ENCODE measurements at regions of chr9 and their contacts with region 1.

Region 1: DNA sequence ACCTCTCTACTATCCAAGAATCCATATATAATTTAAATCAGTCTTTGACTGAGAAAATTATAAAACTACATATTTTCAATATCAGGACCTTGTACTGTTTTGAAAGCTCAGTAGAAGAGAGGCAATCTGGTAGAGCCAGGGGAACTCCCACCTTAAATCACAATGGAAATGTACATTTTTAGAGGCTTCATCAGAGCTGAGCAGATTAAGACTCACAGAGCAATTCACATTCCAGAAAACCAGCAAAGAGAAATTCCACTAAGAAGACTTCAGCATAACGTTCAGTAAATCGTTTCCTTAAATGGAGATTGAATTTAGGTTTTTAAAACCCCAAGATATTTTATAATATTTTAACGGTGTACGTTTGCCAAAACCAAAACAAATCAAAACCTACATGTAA is 227.8 kb upstream of the TRPM3 start:
- DNase-seq: no peak
- H3K4me3 Mint-ChIP-seq: no peak overlapping the region
- H3K27ac Mint-ChIP-seq: no peak overlapping the region
- H3K4me1 Mint-ChIP-seq: no peaks in the 10 kb centered on the region
- H3K27me3 Mint-ChIP-seq: no peaks in the 10 kb centered on the region

Region 2: GRCh38 chr9:71329873-71330272 is 19.3 kb before region 1 on chr9:
- CTCF ChIA-PET with region 1: no interaction called
- POLR2A ChIA-PET with region 1: no interaction called
- intact Hi-C with region 1: loop called (anchors 2 kb)
- DNase-seq: no peak
- H3K4me3 Mint-ChIP-seq: no peak overlapping the region
- H3K27ac Mint-ChIP-seq: no peak overlapping the region
- H3K4me1 Mint-ChIP-seq: no peaks in the 10 kb centered on the region
- H3K27me3 Mint-ChIP-seq: peaks cover 4% of the 10 kb centered on the region

Region 3: GRCh38 chr9:71368157-71368556 is 18.9 kb after region 1 on chr9:
- CTCF ChIA-PET with region 1: no interaction called
- POLR2A ChIA-PET with region 1: no interaction called
- intact Hi-C with region 1: no loop called
- DNase-seq: no peak
- H3K4me3 Mint-ChIP-seq: no peak overlapping the region
- H3K27ac Mint-ChIP-seq: no peak overlapping the region
- H3K4me1 Mint-ChIP-seq: no peaks in the 10 kb centered on the region
- H3K27me3 Mint-ChIP-seq: peaks cover 3% of the 10 kb centered on the region

Measured in activated CD4-positive, alpha-beta memory T cell treated with anti-CD3 and anti-CD28 coated beads for 36 hours (primary cell).